Activated naive CD4-positive, alpha-beta T cell treated with anti-CD3 and anti-CD28 coated beads for 36 hours (primary cell): ENCODE measurements at regions of chr5 and their contacts with region 1.

Region 1: DNA sequence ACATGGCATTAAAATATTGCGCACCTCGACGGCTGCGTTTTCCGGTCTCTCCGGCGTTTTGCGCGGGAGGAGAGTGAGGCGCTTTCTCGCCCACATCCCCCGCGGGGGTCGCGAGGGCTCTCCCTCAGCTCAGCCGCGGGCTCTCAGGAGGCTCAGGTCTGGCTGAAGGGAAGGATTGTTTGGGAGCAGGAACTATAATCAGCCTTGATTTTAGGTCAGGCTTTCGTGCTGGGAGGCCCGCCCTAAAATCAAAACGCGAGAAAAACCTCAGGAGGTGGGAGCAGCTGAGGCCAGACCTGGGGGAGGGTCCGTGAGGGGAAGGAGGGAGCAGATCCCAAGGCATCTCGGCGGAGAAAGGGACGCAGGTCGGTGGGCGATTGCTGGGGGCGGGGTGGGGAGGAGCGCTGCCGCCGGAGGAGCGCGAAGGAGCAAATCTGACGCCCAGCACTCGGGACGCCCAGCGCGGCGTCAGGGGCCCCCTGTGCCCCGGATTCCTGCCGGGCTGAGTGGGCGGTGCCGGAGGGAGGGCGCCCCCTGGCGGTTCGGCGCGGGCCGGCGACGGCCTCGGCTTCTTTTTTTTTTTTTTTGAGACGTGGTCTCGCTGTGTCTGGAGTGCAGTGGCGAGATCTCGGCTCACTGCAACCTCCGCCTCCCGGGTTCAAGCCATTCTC is 18.7 kb upstream of the RNF130 start:
- DNase-seq: peak; percentile 82
- H3K4me3 Mint-ChIP-seq: peak overlapping the region; percentile 80
- H3K27ac Mint-ChIP-seq: peak overlapping the region; percentile 24
- H3K4me1 Mint-ChIP-seq: peaks cover 25% of the 10 kb centered on the region
- H3K27me3 Mint-ChIP-seq: peaks cover 3% of the 10 kb centered on the region

Region 2: GRCh38 chr5:179678223-179679013 is 411.8 kb before region 1 on chr5:
- CTCF ChIA-PET with region 1: no interaction called
- intact Hi-C with region 1: loop called (anchors 2 kb)
- DNase-seq: peak; percentile 94
- H3K4me3 Mint-ChIP-seq: peak overlapping the region; percentile 99
- H3K27ac Mint-ChIP-seq: peak overlapping the region; percentile 95
- H3K4me1 Mint-ChIP-seq: peaks cover 36% of the 10 kb centered on the region
- H3K27me3 Mint-ChIP-seq: no peaks in the 10 kb centered on the region

Region 3: GRCh38 chr5:179858586-179859427 is 231.4 kb before region 1 on chr5 and contains the start of gene MRNIP:
- CTCF ChIA-PET with region 1: no interaction called
- intact Hi-C with region 1: loop called (anchors 2 kb)
- DNase-seq: peak; percentile 93
- H3K4me3 Mint-ChIP-seq: peak within 1 kb of the TSS; percentile 93
- H3K27ac Mint-ChIP-seq: peak within 1 kb of the TSS; percentile 82
- H3K4me1 Mint-ChIP-seq: peaks cover 14% of the 10 kb centered on the region
- H3K27me3 Mint-ChIP-seq: no peaks in the 10 kb centered on the region
- total RNA-seq, gene MRNIP: 16.2 to 16.3 TPM

Region 4: DNA sequence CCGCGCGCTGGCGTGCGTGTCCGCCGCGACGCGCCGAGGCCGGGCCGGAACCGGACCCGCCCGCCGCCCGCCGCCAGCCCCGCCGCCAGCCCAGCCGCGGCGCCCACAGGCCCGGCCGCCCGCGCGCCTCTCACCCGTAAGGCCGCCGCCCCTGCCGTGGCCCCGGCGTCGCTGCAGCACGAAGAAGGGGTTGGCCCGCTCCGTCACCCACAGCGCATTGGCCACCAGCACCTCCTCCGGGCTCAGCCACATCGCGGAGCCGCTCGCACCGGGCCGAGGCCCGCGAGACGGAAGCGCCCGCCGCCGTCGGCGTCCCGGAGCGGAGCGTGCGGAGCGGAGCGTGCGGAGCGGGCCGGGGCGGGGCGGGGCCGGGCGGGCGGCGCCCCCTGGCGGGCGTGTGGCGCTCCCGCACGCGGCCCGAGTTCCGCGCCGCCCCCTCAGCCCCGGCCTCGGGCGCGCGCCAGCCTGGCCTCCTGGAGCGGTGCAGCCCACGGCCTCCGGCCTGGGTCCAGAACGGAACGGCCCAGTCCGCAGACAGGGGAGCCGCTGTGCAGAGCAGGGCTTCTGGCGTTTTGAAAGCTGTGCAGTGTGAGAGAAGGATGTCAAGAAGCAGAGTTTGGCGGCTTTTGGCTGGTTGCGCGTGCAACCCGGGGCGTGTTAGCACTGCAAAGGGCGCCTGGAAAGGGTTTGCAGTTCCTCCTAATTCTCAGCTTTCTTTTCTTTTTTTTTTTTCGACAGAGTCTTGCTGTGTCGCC is 182.5 kb before region 1 on chr5 and contains the start of gene TBC1D9B:
- CTCF ChIA-PET with region 1: interaction called, 5 read pairs
- intact Hi-C with region 1: loop called (anchors 1 kb)
- DNase-seq: peak; percentile 62
- H3K4me3 Mint-ChIP-seq: peak within 1 kb of the TSS; percentile 85
- H3K27ac Mint-ChIP-seq: no peak within 1 kb of the TSS
- H3K4me1 Mint-ChIP-seq: peaks cover 11% of the 10 kb centered on the region
- H3K27me3 Mint-ChIP-seq: no peaks in the 10 kb centered on the region
- total RNA-seq, gene TBC1D9B: 40.2 to 40.4 TPM

Region 5: GRCh38 chr5:180071531-180072255 is 18.5 kb before region 1 on chr5 and contains the start of gene RNF130:
- CTCF ChIA-PET with region 1: interaction called, 8 read pairs
- intact Hi-C with region 1: loop called (anchors 2 kb)
- DNase-seq: peak; percentile 86
- H3K4me3 Mint-ChIP-seq: peak within 1 kb of the TSS; percentile 75
- H3K27ac Mint-ChIP-seq: peak within 1 kb of the TSS; percentile 32
- H3K4me1 Mint-ChIP-seq: peaks cover 23% of the 10 kb centered on the region
- H3K27me3 Mint-ChIP-seq: peaks cover 3% of the 10 kb centered on the region
- total RNA-seq, gene RNF130: 10.3 to 11.9 TPM

Region 6: DNA sequence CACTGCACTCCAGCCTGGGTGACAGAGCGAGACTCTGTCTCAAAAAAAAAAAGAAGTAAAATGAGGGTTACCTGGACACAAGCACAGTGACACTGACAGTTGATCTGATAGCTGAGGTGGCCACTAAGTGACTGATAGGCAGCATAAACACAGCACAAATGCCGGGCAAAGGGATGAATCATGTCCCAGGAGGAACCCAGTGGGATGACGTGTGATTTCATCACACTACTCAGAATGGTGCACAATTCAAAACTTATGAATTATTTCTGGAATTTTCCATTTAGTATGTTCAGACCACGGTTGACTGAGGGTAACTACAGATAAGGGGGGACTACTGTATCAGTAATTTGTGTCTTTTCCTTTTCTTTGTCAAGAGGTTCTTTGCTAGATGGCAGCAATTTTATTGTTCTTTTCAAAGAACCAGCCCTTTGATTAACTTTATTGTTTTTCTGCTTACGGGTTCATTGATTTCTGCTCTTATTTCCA is 15.6 kb after region 1 on chr5:
- CTCF ChIA-PET with region 1: no interaction called
- intact Hi-C with region 1: no loop called
- DNase-seq: no peak
- H3K4me3 Mint-ChIP-seq: no peak overlapping the region
- H3K27ac Mint-ChIP-seq: no peak overlapping the region
- H3K4me1 Mint-ChIP-seq: no peaks in the 10 kb centered on the region
- H3K27me3 Mint-ChIP-seq: peaks cover 7% of the 10 kb centered on the region

Region 7: DNA sequence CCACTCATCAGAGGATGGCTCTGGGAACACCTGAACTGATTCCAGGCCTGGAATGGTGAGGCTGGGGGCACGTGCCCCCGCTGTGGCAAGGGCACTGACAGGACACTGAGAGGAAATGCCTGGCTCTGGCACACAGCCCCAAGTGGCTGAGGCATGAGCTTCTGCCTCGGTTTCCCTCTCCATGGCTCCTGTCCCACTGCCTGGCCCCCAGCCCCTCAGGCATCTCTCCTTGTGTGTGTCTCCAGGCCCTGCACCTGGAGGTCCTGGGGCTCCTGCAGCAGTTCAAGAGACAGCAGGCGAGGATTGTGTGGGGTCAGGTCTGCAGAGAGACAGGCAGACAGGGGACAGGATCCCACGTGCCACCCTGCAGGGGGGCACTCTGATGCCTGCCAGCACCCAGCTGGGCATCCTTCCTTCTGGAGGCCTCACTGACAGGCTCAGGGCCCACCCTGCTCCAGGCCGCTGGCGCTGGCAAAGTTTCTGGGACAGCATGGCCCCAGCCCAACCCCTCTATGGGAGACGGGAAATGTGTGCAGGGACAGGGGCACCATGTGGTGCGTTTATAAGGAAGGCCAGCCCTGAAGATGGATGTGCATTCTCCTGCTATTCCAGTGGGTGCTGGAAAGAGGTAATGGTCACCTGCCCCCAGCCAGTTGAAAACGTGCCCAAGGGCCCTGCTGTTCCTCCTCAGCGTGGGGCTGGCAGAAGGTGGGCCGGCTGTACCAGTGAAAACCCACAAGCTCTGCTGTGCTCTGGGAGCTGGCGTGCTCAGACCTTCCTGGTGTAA is 52.8 kb after region 1 on chr5:
- CTCF ChIA-PET with region 1: no interaction called
- intact Hi-C with region 1: no loop called
- DNase-seq: no peak
- H3K4me3 Mint-ChIP-seq: no peak overlapping the region
- H3K27ac Mint-ChIP-seq: no peak overlapping the region
- H3K4me1 Mint-ChIP-seq: no peaks in the 10 kb centered on the region
- H3K27me3 Mint-ChIP-seq: peaks cover 17% of the 10 kb centered on the region